ENCODE measurements at regions of chr7 and their contacts with region 1.

Region 1: DNA sequence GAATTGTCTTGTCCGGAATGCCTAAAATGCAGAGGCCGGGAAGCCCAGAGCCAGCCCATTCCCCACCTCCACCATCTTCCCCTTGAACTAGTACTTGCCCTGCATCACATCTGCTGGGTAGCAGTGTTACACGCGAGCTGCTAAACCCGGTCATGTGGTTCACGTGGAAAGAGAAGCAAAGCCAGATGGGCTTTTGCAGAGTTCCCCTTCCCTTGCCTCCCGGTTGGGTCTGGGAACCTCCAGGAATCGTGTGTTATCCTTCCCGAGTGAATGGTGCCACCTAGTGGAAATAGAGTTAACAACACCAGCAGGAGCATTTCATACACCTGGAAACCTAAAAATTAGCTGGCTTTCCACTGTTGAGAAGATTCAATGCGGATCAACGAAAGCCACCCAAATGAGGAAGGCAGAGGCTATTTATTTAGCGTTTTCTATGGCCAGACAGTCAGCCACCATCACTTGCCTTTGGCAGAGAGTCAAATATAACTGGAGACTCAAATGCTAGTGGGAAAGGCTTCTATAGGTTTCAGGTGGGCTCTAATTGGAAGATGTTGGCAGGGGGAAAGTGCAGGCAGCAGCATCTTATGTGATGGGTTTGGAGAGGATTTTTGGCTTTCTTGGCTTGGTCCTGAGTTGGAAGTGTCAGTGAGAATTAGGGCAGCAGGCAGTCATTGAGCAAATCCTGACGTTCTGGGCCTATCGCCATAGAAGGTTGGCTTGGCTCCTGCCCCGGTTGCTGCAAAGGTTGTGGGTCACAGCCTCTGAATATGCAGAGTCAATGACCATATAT is 12.9 kb upstream of the DENND2A start:
- DNase-seq: peak in 1 of 2 experiments; percentile 70
- H3K4me3 ChIP-seq: no peak overlapping the region; a peak in 1 of 8 replicates
- H3K27ac ChIP-seq: no peak overlapping the region
- H3K4me1 ChIP-seq: no peaks in the 10 kb centered on the region; a peak in 1 of 7 replicates
- H3K27me3 ChIP-seq: no peaks in the 10 kb centered on the region; a peak in 1 of 7 replicates
- CTCF ChIP-seq: peak; percentile 26 to 92 (median 86)
- EP300 ChIP-seq: no peak
- POLR2A ChIP-seq: no peak
- RAD21 ChIP-seq: peak; percentile 99

Region 2: GRCh38 chr7:140525743-140526142 is 127.8 kb before region 1 on chr7:
- CTCF ChIA-PET with region 1: interaction called, 322 read pairs
- POLR2A ChIA-PET with region 1: interaction called, 3 read pairs
- DNase-seq: no peak
- H3K4me3 ChIP-seq: no peak overlapping the region
- H3K27ac ChIP-seq: no peak overlapping the region
- H3K4me1 ChIP-seq: peaks cover 0 to 3% (median 0%) of the 10 kb centered on the region in 4 experiments; a peak in 2 of 7 replicates
- H3K27me3 ChIP-seq: no peaks in the 10 kb centered on the region
- CTCF ChIP-seq: no peak
- EP300 ChIP-seq: no peak
- POLR2A ChIP-seq: no peak
- RAD21 ChIP-seq: no peak

Region 3: GRCh38 chr7:140640727-140641523 is 12.6 kb before region 1 on chr7 and contains the start of gene DENND2A:
- CTCF ChIA-PET with region 1: interaction called, 35 read pairs
- POLR2A ChIA-PET with region 1: interaction called, 3 read pairs
- DNase-seq: peak in 1 of 2 experiments; percentile 86
- H3K4me3 ChIP-seq: peak within 1 kb of the TSS; percentile 58 to 69 (median 66)
- H3K27ac ChIP-seq: no peak within 1 kb of the TSS; the same call in 1 of the 2 replicates
- H3K4me1 ChIP-seq: peaks cover 9 to 23% (median 15%) of the 10 kb centered on the region in 4 experiments
- H3K27me3 ChIP-seq: peaks cover 0 to 28% (median 14%) of the 10 kb centered on the region in 4 experiments; a peak in 5 of 7 replicates
- CTCF ChIP-seq: no peak
- EP300 ChIP-seq: no peak
- POLR2A ChIP-seq: peak in 1 of 2 experiments; percentile 34; a peak in 1 of 3 replicates
- RAD21 ChIP-seq: no peak
- total RNA-seq, gene DENND2A: 11.4 and 13.0 TPM in 2 replicates